Aorta (tissue), 5 donors: ENCODE measurements at regions of chr1 and their contacts with region 1.

Region 1: GRCh38 chr1:47432071-47433036 is 5.5 kb upstream of the FOXD2 start:
- DNase-seq: peak; percentile 87 to 91
- ATAC-seq: peak; percentile 75
- H3K4me3 ChIP-seq: no peak overlapping the region
- H3K27ac ChIP-seq: no peak overlapping the region
- H3K4me1 ChIP-seq: no peaks in the 10 kb centered on the region
- H3K27me3 ChIP-seq: no peaks in the 10 kb centered on the region

Region 2: DNA sequence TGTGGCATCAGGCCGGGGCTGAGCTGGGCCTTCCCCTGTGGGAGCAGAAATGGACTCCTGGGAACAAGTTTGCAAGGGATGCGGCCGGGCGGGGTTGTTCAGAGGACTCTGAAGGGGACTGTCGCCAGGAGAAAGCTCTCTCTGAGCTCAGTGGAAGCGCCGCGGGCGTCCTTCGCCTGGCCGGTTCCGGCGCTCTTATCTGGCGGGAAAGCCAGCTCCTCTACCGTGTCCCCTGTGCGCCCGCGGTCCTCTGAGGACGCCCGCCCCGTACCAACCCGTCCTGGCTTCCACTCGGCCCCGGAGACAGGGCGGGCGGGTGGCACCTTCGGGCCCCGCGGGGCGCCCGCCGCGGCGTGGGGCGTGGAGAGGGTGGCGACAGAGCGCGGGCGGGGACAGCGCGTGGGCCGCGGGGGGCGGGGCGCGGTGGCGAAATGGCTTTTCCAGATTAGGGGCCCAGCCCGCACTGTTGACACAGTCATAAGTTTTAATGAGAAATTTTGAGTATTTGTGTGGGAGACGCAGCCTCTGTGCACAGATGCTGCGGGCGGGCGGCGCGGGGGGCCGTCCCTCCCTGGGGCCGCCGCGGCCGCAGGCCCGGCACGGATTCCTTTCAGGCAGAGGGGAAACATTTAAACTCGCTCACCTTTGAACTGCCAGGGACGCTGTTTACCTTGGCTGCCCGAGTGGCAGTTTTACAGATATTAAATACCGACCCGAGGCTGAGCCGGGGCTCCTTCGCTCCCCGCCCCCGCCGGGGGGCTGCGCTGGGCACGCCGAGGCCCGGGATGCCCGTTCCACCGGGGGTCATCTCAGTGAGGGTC is 75.7 kb after region 1 on chr1:
- intact Hi-C with region 1: loop called (anchors 5 kb)
- DNase-seq: peak; percentile 44 to 81
- ATAC-seq: peak; percentile 79
- H3K4me3 ChIP-seq: peak overlapping the region; percentile 47 to 49
- H3K27ac ChIP-seq: peak overlapping the region in 1 of 2 donors; percentile 6
- H3K4me1 ChIP-seq: no peaks in the 10 kb centered on the region
- H3K27me3 ChIP-seq: no peaks in the 10 kb centered on the region